K562 (cell line): ENCODE measurements at regions of chrX and their contacts with region 1.

Region 1: DNA sequence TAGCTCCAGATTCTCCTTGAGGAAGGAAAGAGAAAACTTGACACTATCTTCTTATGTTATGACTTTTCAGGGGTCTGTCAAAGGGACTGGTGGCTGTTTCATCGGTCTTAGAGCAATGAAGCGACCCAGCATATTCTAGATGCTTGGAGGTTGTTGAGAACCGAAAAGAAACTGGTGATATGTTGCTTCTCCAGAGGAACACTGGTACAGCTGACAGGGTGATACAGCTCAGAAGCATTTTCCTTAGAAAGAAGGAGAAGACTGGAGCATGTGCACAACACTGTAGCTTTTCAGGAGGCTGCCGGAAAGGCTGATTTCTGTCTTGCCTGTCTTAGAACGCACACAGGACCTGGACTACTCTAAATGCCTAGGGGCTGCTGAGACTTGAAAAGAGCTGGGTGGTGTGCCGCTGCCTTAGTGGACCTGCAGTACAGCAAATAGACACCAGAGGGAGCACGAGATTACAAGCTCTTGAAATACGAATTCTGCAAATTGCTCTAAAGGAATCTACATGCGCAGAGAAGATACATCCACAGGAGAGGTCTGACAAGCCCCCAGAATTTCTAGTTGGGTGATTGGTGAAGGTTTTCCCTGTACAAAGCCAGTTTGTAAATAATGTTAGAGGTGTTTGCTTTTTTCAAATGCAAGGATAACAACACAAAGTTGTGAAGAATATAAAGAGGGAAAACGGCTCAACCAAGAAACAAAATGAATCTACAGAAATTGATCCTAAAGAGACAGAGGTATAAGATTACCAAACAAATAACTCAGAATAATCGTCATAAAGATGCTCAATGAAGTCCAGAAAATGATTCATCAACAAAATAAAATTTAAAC is 223.1 kb upstream of the DMD start:
- DNase-seq: peak; percentile 4 to 25 (median 15)
- ATAC-seq: no peak
- H3K4me3 ChIP-seq: no peak overlapping the region
- H3K27ac ChIP-seq: no peak overlapping the region
- H3K4me1 ChIP-seq: no peaks in the 10 kb centered on the region
- H3K27me3 ChIP-seq: no peaks in the 10 kb centered on the region
- CTCF ChIP-seq: peak in 2 of 3 experiments; percentile 49 to 55; a peak in 4 of 6 replicates
- EP300 ChIP-seq: no peak
- POLR2A ChIP-seq: no peak
- RAD21 ChIP-seq: peak in 1 of 2 experiments; percentile 47; a peak in 1 of 4 replicates

Region 2: DNA sequence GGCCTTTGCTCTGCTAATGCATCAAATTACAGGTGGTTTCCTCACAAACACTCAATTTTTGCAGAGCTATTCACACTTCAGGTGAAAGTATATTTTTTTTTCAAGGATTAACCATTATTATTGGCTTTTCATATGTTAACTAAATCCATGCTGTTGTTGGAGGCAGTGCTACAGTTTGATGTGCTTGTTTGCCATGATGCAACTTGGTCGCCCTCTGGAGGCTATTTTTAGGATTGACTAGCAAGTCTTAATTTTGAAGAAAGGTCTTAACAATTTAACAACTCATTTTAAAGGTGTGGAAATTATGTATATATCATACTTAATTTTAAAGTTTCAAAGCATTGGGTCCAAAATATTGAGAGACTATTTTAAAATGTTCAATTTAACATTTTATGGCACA is 866.4 kb after region 1 on chrX:
- CTCF ChIA-PET with region 1: no interaction called
- POLR2A ChIA-PET with region 1: no interaction called
- in situ Hi-C with region 1: no loop called
- intact Hi-C with region 1: loop called (anchors 5 kb)
- DNase-seq: peak; percentile 4 to 44 (median 16)
- ATAC-seq: no peak
- H3K4me3 ChIP-seq: no peak overlapping the region
- H3K27ac ChIP-seq: no peak overlapping the region
- H3K4me1 ChIP-seq: no peaks in the 10 kb centered on the region
- H3K27me3 ChIP-seq: no peaks in the 10 kb centered on the region
- CTCF ChIP-seq: peak; percentile 18 to 50 (median 30); a peak in 3 of 6 replicates
- EP300 ChIP-seq: no peak
- POLR2A ChIP-seq: no peak
- RAD21 ChIP-seq: peak; percentile 41 to 62; a peak in 3 of 4 replicates